ENCODE measurements at regions of chr11 and their contacts with region 1.

Region 1: GRCh38 chr11:118251858-118252652 is at the start of gene MPZL3:
- DNase-seq: peak; percentile 83
- ATAC-seq: peak; percentile 71
- H3K4me3 Mint-ChIP-seq: peak within 1 kb of the TSS; percentile 95
- H3K27ac Mint-ChIP-seq: peak within 1 kb of the TSS; percentile 98
- H3K4me1 Mint-ChIP-seq: peaks cover 30% of the 10 kb centered on the region
- H3K27me3 Mint-ChIP-seq: no peaks in the 10 kb centered on the region
- total RNA-seq, gene MPZL3: 24.5 to 29.8 TPM

Region 2: DNA sequence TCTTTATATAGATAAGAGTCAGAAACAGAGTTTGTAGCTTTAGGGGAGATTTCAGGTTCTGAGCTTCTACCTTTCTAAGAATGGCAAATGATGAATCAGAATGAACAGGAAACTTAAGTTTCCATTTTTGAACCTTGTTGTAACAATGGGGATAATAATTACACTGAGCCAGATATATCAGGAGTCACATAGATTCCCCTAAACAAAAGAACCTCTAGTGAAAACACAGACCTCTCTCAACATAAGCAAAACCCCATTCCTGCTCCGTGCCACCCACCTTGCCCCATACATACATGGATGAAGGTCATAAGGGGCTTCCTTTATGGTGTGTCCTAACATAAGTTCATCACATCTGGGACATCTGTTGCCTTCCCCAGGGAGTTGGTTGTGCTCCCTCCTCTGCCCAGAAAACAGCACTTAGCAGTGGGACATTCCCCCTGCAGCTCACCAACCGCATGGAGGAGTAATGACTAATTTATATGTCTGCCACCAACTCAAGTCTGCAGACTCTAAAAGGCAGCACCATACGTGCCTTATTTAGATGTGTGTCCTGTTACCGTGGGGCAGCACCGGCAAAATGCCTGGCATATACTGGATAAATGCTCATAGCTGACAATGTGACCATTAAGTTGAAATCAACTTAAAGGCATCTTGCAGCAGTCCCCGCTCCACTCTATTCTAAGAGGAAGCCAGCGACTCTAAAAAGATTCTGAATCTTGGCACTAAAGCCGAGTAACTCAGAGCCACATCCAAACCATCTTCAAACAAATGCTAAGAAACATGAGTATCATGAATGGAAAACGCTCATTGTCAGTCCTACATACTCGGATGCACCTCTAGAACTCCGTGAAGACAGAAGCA is 35.2 kb before region 1 on chr11:
- POLR2A ChIA-PET with region 1: interaction called, 19 read pairs
- DNase-seq: no peak
- ATAC-seq: peak; percentile 50
- H3K4me3 Mint-ChIP-seq: peak overlapping the region; percentile 82
- H3K27ac Mint-ChIP-seq: peak overlapping the region; percentile 95
- H3K4me1 Mint-ChIP-seq: peaks cover 91% of the 10 kb centered on the region
- H3K27me3 Mint-ChIP-seq: no peaks in the 10 kb centered on the region

Region 3: DNA sequence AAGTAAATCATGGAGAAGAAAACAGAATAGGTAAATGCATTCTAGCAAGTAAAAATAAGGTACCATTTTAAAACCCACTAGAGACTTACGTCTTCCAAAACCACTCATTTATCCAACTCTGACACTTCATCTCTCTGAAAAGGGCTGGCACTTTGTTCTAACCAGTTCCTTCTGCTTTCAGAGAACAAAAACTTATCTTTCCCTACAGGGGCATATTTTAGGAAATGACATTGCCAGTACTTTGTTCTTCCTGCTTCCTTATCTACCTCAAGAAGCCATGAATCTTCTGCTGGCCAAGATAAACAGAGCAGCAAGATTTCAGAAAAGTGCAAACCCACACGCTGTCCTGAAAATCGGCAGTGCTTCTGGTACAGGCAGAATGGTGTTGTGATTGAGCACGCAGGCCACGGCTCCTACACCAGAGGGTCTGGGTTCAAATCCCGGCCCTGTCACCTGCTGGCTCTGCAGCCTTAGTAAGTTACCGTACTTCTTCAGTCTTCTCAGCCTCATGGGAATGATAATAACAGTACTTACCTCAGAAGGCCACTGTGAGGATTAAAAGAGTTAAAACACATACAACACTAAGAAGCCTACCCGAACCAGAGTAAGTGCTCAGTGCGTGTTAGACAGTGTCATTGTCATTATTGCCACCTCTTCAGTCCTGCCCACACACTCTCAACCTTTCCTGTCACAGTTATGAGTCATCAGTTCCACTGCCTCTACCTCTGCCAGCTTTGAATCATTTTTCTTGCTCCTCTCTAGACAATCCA is 10.9 kb before region 1 on chr11:
- POLR2A ChIA-PET with region 1: interaction called, 21 read pairs
- DNase-seq: no peak
- ATAC-seq: peak; percentile 94
- H3K4me3 Mint-ChIP-seq: peak overlapping the region; percentile 65
- H3K27ac Mint-ChIP-seq: peak overlapping the region; percentile 90
- H3K4me1 Mint-ChIP-seq: peaks cover 64% of the 10 kb centered on the region
- H3K27me3 Mint-ChIP-seq: no peaks in the 10 kb centered on the region

Measured in activated naive CD8-positive, alpha-beta T cell treated with anti-CD3 and anti-CD28 coated beads, Interleukin-2, amount 10 ng/mL, durations not matched to agents 7 days and 5 days (primary cell).